Heart left ventricle (tissue), 16 donors: ENCODE measurements at regions of chr2 and their contacts with region 1.

Region 1: GRCh38 chr2:174561283-174561971 is 36.2 kb downstream of the WIPF1 start:
- DNase-seq: peak; percentile 77 to 82 (median 80)
- ATAC-seq: peak; percentile 91 to 98 (median 97)
- H3K4me3 ChIP-seq: peak overlapping the region in 4 of 12 donors; percentile 2 to 19 (median 13)
- H3K27ac ChIP-seq: peak overlapping the region in 11 of 12 donors; percentile 41 to 72 (median 60)
- H3K4me1 ChIP-seq: peaks cover 6 to 24% (median 16%) of the 10 kb centered on the region in 12 donors
- H3K27me3 ChIP-seq: no peaks in the 10 kb centered on the region
- CTCF ChIP-seq: no peak
- POLR2A ChIP-seq: no peak

Region 2: DNA sequence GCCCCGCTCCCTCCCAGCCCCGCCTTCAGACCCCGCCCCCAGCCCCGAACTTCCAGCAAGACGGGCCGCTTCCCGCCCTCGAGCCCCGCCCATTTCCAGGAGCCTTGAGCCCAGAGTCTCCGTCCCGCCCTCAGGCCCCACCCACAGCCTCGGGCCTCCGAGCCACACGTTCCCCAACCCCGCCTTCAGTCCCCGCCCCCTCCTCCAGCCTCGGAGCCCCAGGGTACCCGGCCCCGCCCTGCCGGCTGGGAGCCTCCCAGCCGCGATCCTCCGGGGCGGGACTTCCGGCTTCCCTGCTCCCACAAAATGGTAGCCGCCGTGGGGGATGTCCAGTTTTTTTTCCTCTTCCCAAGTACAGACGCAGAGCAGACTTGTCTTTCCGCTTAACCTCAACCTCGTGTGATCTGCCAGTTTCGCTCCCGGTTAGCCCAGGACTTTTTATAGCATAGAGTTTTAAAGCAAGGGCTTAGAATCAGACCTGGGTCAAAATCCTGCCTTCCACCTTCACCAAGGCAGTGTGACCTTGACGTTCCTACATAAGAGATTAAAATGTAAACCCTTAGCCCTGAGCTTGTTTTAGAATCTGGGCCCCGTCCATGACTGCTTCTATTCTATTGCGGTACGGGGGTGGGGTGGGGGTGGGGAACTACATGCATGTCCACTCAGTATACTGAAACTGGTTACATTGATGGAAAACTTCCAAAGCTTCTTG is 74.2 kb before region 1 on chr2:
- intact Hi-C with region 1: loop called in 1 of 10 experiments (anchors 5 kb)
- DNase-seq: peak; percentile 100
- ATAC-seq: peak; percentile 99 to 100 (median 99)
- H3K4me3 ChIP-seq: peak overlapping the region; percentile 72 to 96 (median 92)
- H3K27ac ChIP-seq: peak overlapping the region; percentile 83 to 96 (median 91)
- H3K4me1 ChIP-seq: peaks cover 0 to 29% (median 3%) of the 10 kb centered on the region in 12 donors
- H3K27me3 ChIP-seq: no peaks in the 10 kb centered on the region
- CTCF ChIP-seq: no peak
- POLR2A ChIP-seq: no peak

Region 3: DNA sequence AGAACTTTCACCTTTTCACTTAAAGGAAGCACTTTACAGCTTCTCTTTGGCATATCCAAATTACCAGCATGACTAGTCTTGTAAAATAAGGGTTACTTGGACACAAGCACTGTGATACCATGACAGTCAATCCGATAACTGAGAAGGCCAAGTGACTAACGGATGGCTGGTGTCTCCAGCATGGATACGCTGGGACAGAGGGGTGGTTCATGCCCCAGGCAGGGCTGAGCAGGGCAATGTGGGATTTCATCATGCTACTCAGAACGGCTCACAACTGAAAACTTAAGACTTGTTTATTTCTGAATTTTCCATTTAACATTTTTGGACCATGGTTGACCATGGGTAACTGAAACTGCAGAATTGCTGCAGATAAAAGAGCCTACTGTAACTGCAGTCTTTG is 31.5 kb before region 1 on chr2:
- intact Hi-C with region 1: loop called in 1 of 10 experiments (anchors 2 kb)
- DNase-seq: no peak
- ATAC-seq: no peak
- H3K4me3 ChIP-seq: no peak overlapping the region
- H3K27ac ChIP-seq: no peak overlapping the region
- H3K4me1 ChIP-seq: peaks cover 0 to 14% (median 0%) of the 10 kb centered on the region in 12 donors
- H3K27me3 ChIP-seq: no peaks in the 10 kb centered on the region
- CTCF ChIP-seq: no peak
- POLR2A ChIP-seq: no peak

Region 4: DNA sequence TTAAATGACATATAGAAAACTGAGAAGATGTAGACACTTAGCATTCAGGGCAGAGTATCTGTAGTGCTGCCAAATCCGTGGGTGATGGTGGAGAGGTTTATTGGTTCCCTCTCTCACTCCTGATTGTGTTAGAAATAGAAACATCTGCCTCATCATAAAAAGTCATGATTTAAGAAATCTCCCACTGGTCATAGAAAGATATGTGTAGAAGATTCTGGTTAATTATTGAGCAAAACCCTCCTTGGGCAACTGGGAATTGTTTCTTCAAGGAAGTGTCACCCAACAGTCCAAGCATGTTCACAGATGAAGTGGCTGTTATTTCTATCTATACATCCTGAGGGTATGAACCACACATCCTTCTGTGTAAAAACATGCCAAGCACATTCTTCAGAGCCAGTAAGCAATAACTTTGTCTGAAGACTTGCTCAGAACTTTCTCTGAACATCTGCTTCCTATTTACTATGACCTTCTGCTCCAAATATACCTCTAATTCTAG is 236.4 kb after region 1 on chr2:
- intact Hi-C with region 1: no loop called
- DNase-seq: no peak
- ATAC-seq: no peak
- H3K4me3 ChIP-seq: no peak overlapping the region
- H3K27ac ChIP-seq: no peak overlapping the region
- H3K4me1 ChIP-seq: no peaks in the 10 kb centered on the region
- H3K27me3 ChIP-seq: no peaks in the 10 kb centered on the region
- CTCF ChIP-seq: no peak
- POLR2A ChIP-seq: no peak

Region 5: GRCh38 chr2:174997110-174997509 is 435.7 kb after region 1 on chr2:
- intact Hi-C with region 1: loop called in 1 of 10 experiments (anchors 10 kb)
- DNase-seq: no peak
- ATAC-seq: no peak
- H3K4me3 ChIP-seq: no peak overlapping the region
- H3K27ac ChIP-seq: no peak overlapping the region
- H3K4me1 ChIP-seq: peaks cover 0 to 24% (median 10%) of the 10 kb centered on the region in 12 donors
- H3K27me3 ChIP-seq: no peaks in the 10 kb centered on the region
- CTCF ChIP-seq: no peak
- POLR2A ChIP-seq: no peak